Activated T-helper 2 cell treated with anti-CD3 and anti-CD28 coated beads, Interferon-gamma antibody, Interleukin-2, Interleukin-4, amounts not matched to agents 10 μg/mL and 5 μg/mL and 100 μg/mL, durations not matched to agents 14 hours and 24 hours and 36 hours (primary cell): ENCODE measurements at regions of chr4 and their contacts with region 1.

Region 1: DNA sequence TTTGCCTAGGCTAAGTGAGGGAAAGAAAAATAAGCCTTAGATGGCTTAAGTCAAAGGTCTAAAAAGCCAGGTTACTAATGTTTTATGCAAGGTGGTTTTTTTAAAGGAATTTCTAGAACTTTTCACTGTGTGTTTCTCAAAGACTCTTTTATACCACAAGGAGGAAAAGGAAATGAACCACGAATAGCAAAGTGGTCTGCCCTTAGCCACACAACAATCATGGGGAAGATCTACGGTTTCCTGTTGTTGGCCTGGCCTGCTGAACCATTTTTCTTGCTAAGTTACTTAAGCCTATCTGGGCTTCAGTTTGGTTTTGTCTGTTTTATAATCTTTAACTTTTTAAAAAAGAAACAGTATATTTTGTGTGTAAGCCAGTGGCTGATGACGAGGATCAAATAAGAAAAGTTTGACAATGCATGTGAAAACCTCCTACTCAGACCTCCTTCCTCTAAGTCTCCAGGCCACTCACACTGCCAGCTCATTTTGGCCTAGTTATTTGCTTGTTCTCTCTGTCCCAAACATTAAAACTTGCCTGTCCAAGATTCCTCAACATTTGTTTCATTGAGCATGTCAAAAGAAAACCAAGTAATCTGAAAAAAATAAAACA is 56.7 kb upstream of the COL25A1 start:
- DNase-seq: peak; percentile 52
- H3K4me3 Mint-ChIP-seq: peak overlapping the region; percentile 14
- H3K27ac Mint-ChIP-seq: peak overlapping the region; percentile 80
- H3K4me1 Mint-ChIP-seq: peaks cover 37% of the 10 kb centered on the region
- H3K27me3 Mint-ChIP-seq: peaks cover 31% of the 10 kb centered on the region

Region 2: GRCh38 chr4:108849611-108850168 is 509.5 kb before region 1 on chr4:
- intact Hi-C with region 1: loop called (anchors 2 kb)
- DNase-seq: no peak
- H3K4me3 Mint-ChIP-seq: no peak overlapping the region
- H3K27ac Mint-ChIP-seq: peak overlapping the region; percentile 60
- H3K4me1 Mint-ChIP-seq: peaks cover 40% of the 10 kb centered on the region
- H3K27me3 Mint-ChIP-seq: no peaks in the 10 kb centered on the region

Region 3: DNA sequence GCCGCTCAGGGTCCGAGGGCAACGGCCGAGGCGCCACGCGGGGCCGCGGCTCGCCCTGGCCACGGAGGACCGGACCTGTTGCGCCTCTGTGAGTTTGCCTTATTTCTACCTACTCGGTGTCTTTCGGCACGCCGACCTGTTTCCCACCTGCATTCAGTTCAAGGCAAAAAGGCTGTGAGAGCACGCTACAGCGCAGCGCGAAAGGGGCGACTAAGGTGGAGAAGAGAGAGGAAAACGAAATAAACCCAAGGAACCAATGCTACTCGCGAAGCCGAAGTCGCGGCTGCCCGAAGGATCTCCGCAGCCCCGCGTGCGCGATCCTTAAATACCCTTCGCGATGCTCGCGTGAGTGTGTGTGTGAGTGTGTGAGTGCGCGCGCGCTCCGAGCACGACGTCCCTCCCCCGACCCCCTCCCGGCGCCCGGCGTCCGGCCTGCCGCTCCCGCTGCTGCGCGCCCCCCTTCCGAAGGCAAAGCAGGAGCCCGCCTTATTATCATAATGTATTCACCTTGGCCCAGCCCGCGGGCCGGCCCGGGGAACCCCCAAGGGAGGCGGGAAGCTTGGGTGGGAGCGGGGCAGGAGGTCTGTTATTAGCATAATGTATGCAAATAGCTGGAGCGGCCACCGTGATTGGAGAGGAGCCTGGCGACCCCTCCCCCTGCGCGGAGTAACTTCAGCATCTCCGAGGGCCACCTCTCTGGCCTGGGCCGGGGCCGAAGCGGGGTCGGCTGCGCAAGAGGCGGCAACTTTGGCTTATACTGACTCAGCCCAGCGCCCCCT is 56.6 kb before region 1 on chr4 and contains the start of gene COL25A1:
- intact Hi-C with region 1: loop called (anchors 5 kb)
- DNase-seq: peak; percentile 21
- H3K4me3 Mint-ChIP-seq: peak within 1 kb of the TSS; percentile 74
- H3K27ac Mint-ChIP-seq: no peak within 1 kb of the TSS
- H3K4me1 Mint-ChIP-seq: peaks cover 8% of the 10 kb centered on the region
- H3K27me3 Mint-ChIP-seq: peaks cover 76% of the 10 kb centered on the region
- total RNA-seq, gene COL25A1: 0.07 TPM in 1 of 2 replicates, not detected in the other

Region 4: DNA sequence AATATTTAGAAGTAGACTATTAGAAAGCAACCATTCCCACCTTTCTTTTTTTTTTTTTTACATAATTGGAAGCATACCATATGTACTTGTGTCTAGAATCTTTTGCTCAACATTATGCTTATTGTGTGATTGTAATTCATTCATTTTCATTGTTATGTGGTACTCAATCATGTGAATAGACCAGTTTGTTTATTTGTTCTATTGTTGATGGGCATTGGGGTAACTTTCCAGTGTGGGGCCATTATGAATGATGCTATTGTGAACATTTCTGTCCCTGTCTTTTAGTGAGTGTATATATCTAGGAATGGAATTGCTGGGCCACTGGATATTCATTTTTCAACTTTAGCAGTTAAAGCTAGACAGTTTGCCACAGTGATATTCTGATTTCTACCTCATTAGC is 138.4 kb after region 1 on chr4:
- intact Hi-C with region 1: no loop called
- DNase-seq: no peak
- H3K4me3 Mint-ChIP-seq: no peak overlapping the region
- H3K27ac Mint-ChIP-seq: no peak overlapping the region
- H3K4me1 Mint-ChIP-seq: no peaks in the 10 kb centered on the region
- H3K27me3 Mint-ChIP-seq: no peaks in the 10 kb centered on the region

Region 5: GRCh38 chr4:109640644-109641043 is 281.5 kb after region 1 on chr4:
- intact Hi-C with region 1: no loop called
- DNase-seq: no peak
- H3K4me3 Mint-ChIP-seq: no peak overlapping the region
- H3K27ac Mint-ChIP-seq: no peak overlapping the region
- H3K4me1 Mint-ChIP-seq: peaks cover 10% of the 10 kb centered on the region
- H3K27me3 Mint-ChIP-seq: no peaks in the 10 kb centered on the region